ENCODE measurements at regions of chr17 and their contacts with region 1.

Region 1: DNA sequence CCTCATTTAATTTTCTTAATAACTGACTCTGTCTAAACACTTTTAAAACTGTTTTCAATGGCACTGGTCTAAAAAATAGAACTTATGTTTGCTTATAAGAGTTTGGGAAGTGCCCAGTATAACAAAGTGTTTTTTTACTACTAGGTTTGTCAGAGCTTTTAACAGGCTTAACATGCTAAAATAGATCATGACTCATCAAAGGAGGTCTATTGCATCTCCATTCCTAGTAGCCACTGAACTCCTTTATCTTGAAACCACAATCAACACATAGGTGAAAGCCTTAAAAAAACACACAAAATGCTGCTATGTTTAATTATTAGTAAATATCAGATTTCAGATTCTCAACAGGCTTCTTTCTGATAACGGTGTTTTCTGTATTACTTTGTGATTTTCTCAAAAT is 196.4 kb upstream of the KIF2B start:
- DNase-seq: no peak

Region 2: DNA sequence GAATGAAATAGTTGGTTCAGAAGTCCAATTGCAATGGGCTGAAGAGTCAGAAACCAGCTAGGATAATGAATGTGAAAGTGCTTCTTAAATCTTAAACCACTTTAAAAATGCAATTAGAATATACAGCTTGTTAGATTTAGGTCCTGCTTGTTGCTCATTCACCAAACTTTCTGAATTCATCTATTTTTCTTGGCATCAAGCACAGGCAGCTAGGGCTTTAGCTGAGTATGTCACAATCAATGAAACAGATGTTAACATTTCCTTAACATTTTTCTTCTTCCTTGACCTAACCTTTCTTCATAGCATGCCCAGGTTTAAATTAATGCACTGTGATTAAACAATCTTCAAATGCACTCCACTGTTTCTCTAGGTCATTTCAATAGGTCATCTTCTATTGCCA is 210.8 kb after region 1 on chr17:
- intact Hi-C with region 1: no loop called
- DNase-seq: no peak

Region 3: DNA sequence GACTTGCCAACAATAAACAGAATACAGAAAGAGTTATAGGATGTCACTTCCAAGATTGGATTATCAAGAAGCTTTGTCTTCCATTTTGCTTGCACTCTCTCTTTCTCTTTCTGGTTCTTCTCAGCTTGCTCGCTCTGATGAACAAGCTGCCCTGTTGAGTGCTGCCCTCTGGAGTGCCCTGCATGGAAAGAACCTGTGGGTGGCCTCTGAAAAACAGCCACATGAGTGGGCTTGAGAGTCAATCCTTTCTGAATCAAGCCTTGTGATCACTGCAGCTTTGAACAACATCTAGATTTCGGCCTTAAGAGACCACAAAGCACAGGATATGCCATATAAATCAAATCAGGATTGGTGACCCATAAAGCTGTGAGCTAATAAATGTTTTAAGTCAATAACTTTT is 381.6 kb after region 1 on chr17:
- intact Hi-C with region 1: loop called (anchors 10 kb)
- DNase-seq: no peak

Measured in head of caudate nucleus (tissue), 42 donors.